Heart right ventricle (tissue), 16 donors: ENCODE measurements at regions of chr2 and their contacts with region 1.

Region 1: GRCh38 chr2:215537611-215538010 is 101.7 kb upstream of the FN1 start:
- DNase-seq: peak in 1 of 2 donors; percentile 22
- ATAC-seq: peak in 5 of 8 donors; percentile 40 to 52 (median 47)
- H3K4me3 ChIP-seq: no peak overlapping the region
- H3K27ac ChIP-seq: peak overlapping the region in 1 of 10 donors; percentile 23
- H3K4me1 ChIP-seq: peaks cover 0 to 35% (median 17%) of the 10 kb centered on the region in 9 donors
- H3K27me3 ChIP-seq: no peaks in the 10 kb centered on the region
- CTCF ChIP-seq: no peak

Region 2: GRCh38 chr2:215573496-215573895 is 35.9 kb after region 1 on chr2:
- intact Hi-C with region 1: loop called in 1 of 10 experiments (anchors 5 kb)
- DNase-seq: no peak
- ATAC-seq: peak in 5 of 8 donors; percentile 27 to 67 (median 45)
- H3K4me3 ChIP-seq: no peak overlapping the region
- H3K27ac ChIP-seq: peak overlapping the region in 5 of 10 donors; percentile 17 to 53 (median 47)
- H3K4me1 ChIP-seq: peaks cover 0 to 12% (median 0%) of the 10 kb centered on the region in 9 donors
- H3K27me3 ChIP-seq: no peaks in the 10 kb centered on the region
- CTCF ChIP-seq: no peak